Activated naive CD4-positive, alpha-beta T cell treated with anti-CD3 and anti-CD28 coated beads for 36 hours (primary cell): ENCODE measurements at regions of chr1 and their contacts with region 1.

Region 1: GRCh38 chr1:40143891-40144575 is 17.2 kb upstream of the RLF start:
- DNase-seq: peak; percentile 76
- H3K4me3 Mint-ChIP-seq: no peak overlapping the region
- H3K27ac Mint-ChIP-seq: no peak overlapping the region
- H3K4me1 Mint-ChIP-seq: peaks cover 6% of the 10 kb centered on the region
- H3K27me3 Mint-ChIP-seq: peaks cover 14% of the 10 kb centered on the region

Region 2: DNA sequence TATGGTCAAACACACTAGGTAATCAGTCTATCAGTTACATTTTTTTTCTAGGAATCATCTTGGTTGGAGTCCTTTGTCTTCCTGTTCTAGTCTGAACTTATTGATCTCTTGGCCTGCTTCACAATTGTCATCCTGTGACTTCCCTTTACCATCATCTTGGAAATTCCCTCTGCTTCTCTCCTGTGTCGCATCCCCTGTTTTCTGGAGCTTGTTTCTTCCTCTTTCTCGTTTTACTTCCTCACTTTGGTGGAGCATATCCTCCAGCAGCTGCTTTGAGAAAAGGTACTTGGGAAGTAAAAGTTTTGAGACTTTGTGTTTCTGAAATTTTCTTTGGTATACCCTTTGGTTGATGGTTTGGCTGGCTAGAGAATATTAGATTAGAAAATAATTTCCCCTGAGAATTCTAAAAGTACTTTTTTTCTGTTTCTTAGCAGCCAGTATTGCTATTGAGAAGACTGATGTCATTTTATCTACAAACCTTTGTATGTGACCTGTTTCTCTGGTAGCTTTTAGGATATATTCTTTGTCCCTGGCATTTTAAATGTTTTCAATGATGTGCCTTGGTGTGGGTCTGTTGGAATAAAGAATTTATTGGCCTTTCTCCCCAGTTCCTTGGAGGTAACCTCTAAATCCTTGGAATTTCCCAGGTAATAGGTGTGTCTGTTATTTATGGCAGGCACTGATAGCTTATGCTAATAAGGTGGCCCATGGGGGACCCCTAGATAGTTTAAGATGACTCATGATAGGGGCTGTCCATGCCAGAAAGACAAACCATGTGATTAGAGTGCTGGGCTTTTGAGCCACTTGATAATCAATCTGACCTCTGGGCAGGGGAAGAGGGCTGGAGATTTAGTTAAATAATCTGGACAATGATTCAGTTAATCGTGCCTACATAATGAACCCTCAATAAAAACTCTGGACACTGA is 236.2 kb before region 1 on chr1:
- CTCF ChIA-PET with region 1: no interaction called
- intact Hi-C with region 1: no loop called
- DNase-seq: no peak
- H3K4me3 Mint-ChIP-seq: no peak overlapping the region
- H3K27ac Mint-ChIP-seq: no peak overlapping the region
- H3K4me1 Mint-ChIP-seq: peaks cover 2% of the 10 kb centered on the region
- H3K27me3 Mint-ChIP-seq: peaks cover 34% of the 10 kb centered on the region

Region 3: GRCh38 chr1:39995973-39996393 is 148.1 kb before region 1 on chr1:
- CTCF ChIA-PET with region 1: no interaction called
- intact Hi-C with region 1: no loop called
- DNase-seq: peak; percentile 13
- H3K4me3 Mint-ChIP-seq: no peak overlapping the region
- H3K27ac Mint-ChIP-seq: no peak overlapping the region
- H3K4me1 Mint-ChIP-seq: peaks cover 5% of the 10 kb centered on the region
- H3K27me3 Mint-ChIP-seq: no peaks in the 10 kb centered on the region

Region 4: GRCh38 chr1:40291293-40291692 is 147.3 kb after region 1 on chr1:
- CTCF ChIA-PET with region 1: interaction called, 13 read pairs
- intact Hi-C with region 1: no loop called
- DNase-seq: no peak
- H3K4me3 Mint-ChIP-seq: no peak overlapping the region
- H3K27ac Mint-ChIP-seq: no peak overlapping the region
- H3K4me1 Mint-ChIP-seq: no peaks in the 10 kb centered on the region
- H3K27me3 Mint-ChIP-seq: no peaks in the 10 kb centered on the region

Region 5: DNA sequence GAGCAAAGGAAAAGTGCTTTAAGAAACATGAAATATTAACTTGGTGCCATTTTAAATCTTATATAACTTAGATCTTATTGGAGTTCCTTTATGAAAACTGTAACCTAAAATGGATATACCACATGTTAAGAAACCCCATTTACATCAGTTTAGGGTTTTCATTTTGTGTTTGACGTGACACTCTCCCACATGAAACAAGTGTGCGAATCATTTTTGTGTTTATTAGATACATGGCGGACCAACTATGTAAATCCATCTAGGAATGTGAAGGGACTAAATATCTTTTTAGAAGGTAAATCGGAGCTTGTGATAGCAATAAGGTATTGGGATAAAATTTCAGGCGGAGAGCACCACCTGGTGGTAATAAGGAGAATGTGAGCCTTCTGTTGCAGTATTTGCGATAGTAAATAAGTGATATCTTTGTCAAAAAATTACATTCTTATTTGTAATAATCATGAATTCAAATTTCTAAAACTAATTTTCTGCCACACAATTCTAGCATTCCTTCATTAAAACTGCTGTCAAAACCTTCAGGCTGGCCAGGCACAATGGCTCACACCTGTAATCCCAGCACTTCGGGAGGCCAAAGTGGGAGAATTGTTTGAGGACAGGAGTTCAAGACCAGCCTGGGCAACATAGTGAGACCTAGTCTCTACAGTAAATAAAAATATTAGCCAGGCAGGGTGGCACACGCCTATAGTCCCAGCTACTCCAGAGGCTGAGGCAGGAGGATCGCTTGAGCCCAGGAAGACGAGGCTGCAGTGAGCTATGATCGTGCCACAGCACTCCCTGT is 260.8 kb after region 1 on chr1:
- CTCF ChIA-PET with region 1: interaction called, 6 read pairs
- intact Hi-C with region 1: loop called (anchors 2 kb)
- DNase-seq: peak; percentile 62
- H3K4me3 Mint-ChIP-seq: peak overlapping the region; percentile 41
- H3K27ac Mint-ChIP-seq: peak overlapping the region; percentile 94
- H3K4me1 Mint-ChIP-seq: peaks cover 71% of the 10 kb centered on the region
- H3K27me3 Mint-ChIP-seq: no peaks in the 10 kb centered on the region

Region 6: DNA sequence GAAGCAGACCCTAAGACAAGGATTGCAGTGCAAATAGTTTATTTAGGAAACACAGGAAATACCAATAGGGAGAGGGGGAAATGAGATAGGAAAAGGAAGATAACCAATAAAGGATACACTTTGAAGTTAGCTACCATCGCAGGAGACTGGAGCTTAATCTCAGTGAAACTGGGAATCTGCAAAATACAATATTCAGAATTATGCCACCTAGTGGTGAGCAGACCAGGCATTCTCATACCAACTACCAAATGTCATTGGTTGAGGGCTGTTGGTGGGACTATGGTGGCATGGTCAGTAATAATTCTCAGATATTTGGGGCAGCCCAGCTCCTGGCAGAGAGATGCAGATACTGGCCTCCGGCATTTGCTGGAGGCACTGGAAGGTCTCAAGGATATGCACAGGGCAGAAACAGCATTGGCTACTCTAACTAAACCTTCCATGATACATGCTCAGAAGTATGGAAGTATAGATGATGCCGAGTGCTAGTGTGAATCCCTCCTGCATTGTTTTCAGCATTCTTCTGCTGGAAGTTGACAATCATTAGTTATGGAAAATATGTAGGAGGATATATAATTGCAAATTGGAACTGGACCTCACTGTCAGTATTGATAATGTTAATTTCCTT is 294.5 kb after region 1 on chr1:
- CTCF ChIA-PET with region 1: interaction called, 7 read pairs
- intact Hi-C with region 1: loop called (anchors 1 kb)
- DNase-seq: peak; percentile 33
- H3K4me3 Mint-ChIP-seq: no peak overlapping the region
- H3K27ac Mint-ChIP-seq: no peak overlapping the region
- H3K4me1 Mint-ChIP-seq: peaks cover 6% of the 10 kb centered on the region
- H3K27me3 Mint-ChIP-seq: no peaks in the 10 kb centered on the region

Region 7: DNA sequence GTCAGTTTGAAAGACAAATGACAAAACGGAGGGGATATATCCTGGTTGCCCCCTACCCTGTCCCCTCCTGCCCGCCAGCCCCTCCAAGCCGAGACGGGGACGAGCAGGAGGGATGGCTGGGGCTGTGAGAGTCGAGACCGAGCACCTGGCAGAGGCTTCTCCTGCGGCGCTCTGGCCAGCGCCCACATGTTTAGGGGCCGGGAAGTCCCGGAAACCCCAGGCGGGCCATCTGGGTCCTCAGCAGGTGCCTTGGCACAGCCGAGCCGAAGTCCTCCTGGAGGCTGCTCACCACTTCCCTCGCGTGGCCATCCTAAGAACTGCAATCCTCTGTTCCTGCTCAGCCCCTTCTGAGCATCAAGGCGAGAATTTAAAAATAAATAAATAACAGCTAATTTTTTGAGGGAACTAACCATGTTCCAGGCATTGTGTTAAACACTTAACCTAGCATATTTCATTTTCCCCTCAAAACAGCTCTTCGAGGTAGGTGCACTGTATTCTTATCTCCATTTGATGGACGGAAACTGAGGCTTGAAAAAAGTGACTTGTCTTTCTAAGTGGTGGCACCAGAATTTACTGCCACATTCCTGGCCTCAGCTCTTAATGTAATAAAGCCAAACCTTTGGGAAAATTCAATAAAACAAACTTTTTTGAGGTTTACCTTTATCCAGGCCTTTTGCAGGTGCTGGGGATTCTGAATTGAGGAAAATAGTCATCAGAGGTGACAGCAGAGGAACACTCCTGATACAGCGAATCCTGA is 524.9 kb after region 1 on chr1:
- CTCF ChIA-PET with region 1: interaction called, 6 read pairs
- intact Hi-C with region 1: loop called (anchors 5 kb)
- DNase-seq: peak; percentile 93
- H3K4me3 Mint-ChIP-seq: peak overlapping the region; percentile 39
- H3K27ac Mint-ChIP-seq: no peak overlapping the region
- H3K4me1 Mint-ChIP-seq: peaks cover 6% of the 10 kb centered on the region
- H3K27me3 Mint-ChIP-seq: no peaks in the 10 kb centered on the region

Region 8: GRCh38 chr1:40849801-40850592 is 706.0 kb after region 1 on chr1:
- CTCF ChIA-PET with region 1: interaction called, 3 read pairs
- intact Hi-C with region 1: loop called (anchors 5 kb)
- DNase-seq: peak; percentile 87
- H3K4me3 Mint-ChIP-seq: no peak overlapping the region
- H3K27ac Mint-ChIP-seq: no peak overlapping the region
- H3K4me1 Mint-ChIP-seq: peaks cover 8% of the 10 kb centered on the region
- H3K27me3 Mint-ChIP-seq: no peaks in the 10 kb centered on the region